ENCODE measurements at regions of chr7 and their contacts with region 1.

Region 1: GRCh38 chr7:114916261-114916892 is 5.5 kb upstream of the MDFIC start:
- DNase-seq: peak in 1 of 9 donors; percentile 50
- ATAC-seq: peak; percentile 73
- H3K4me3 ChIP-seq: peak overlapping the region; percentile 14
- H3K4me3 Mint-ChIP-seq: peak overlapping the region; percentile 25 to 78 (median 65)
- H3K27ac ChIP-seq: peak overlapping the region; percentile 8
- H3K27ac Mint-ChIP-seq: peak overlapping the region; percentile 59 to 96 (median 82)
- H3K4me1 ChIP-seq: peaks cover 7 to 22% of the 10 kb centered on the region in 2 donors
- H3K4me1 Mint-ChIP-seq: peaks cover 9 to 43% (median 26%) of the 10 kb centered on the region in 7 donors
- H3K27me3 ChIP-seq: no peaks in the 10 kb centered on the region
- H3K27me3 Mint-ChIP-seq: no peaks in the 10 kb centered on the region

Region 2: DNA sequence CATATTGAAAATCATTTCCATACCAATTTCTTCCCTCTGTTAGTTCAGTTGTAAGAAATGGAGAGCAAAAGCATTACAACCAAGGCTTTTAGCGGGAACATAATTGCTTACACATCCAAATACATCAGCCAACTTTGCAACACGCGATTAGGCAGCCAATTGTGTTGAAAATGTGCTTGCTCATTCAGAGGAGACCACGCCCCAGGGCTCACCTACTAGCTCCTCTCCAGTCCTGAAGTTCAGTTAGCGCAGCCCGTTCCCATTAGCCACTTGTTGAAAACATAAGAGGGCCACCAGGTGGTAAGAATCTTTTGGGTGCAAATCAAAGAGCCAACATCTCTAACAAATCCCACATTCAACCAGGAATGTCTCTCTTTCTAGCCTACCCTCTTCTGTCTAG is 207.7 kb before region 1 on chr7:
- CTCF ChIA-PET with region 1: no interaction called
- POLR2A ChIA-PET with region 1: no interaction called
- intact Hi-C with region 1: no loop called
- DNase-seq: no peak
- ATAC-seq: no peak
- H3K4me3 ChIP-seq: no peak overlapping the region
- H3K4me3 Mint-ChIP-seq: no peak overlapping the region
- H3K27ac ChIP-seq: no peak overlapping the region
- H3K27ac Mint-ChIP-seq: no peak overlapping the region
- H3K4me1 ChIP-seq: no peaks in the 10 kb centered on the region
- H3K4me1 Mint-ChIP-seq: no peaks in the 10 kb centered on the region
- H3K27me3 ChIP-seq: no peaks in the 10 kb centered on the region
- H3K27me3 Mint-ChIP-seq: peaks cover 0 to 14% (median 0%) of the 10 kb centered on the region in 5 donors

Region 3: DNA sequence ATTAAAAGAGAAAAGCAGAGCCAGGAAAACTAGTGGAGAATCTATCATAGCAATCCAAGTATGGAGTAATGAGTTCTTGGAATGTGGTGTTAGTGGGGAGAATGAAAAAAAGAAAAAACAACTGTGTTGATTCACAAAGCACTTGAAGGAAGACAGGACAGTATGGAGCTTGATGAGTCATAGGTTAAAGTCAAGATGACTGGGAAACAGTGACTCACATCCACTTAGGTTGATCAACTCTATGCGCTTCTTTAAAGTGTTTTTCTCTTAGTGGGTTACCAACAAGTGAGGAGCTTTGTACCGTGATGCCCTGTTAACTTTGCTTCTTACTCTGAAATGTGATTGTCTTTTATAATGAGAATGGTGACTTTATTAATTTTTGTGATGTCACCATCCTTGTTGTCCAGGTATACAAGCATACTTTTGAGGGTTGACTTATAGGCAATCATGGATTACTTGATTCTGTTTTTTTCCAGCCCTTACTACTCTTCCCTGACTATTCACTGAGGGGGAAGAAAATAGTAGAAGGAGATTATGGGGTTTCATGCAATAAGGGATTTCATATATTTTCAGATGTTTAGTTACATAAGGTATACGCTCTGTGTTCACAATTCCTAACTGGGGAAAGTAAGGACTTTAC is 26.6 kb before region 1 on chr7:
- CTCF ChIA-PET with region 1: no interaction called
- POLR2A ChIA-PET with region 1: no interaction called
- intact Hi-C with region 1: loop called in 1 of 2 experiments (anchors 1 kb)
- DNase-seq: no peak
- ATAC-seq: peak; percentile 49
- H3K4me3 ChIP-seq: no peak overlapping the region
- H3K4me3 Mint-ChIP-seq: no peak overlapping the region
- H3K27ac ChIP-seq: no peak overlapping the region
- H3K27ac Mint-ChIP-seq: peak overlapping the region in 3 of 9 donors; percentile 33 to 67 (median 53)
- H3K4me1 ChIP-seq: no peaks in the 10 kb centered on the region
- H3K4me1 Mint-ChIP-seq: peaks cover 0 to 22% (median 0%) of the 10 kb centered on the region in 7 donors
- H3K27me3 ChIP-seq: peaks cover 0 to 2% of the 10 kb centered on the region in 2 donors
- H3K27me3 Mint-ChIP-seq: no peaks in the 10 kb centered on the region

Region 4: GRCh38 chr7:115135769-115136410 is 219.5 kb after region 1 on chr7:
- CTCF ChIA-PET with region 1: no interaction called
- POLR2A ChIA-PET with region 1: no interaction called
- intact Hi-C with region 1: loop called (anchors 5 kb)
- DNase-seq: peak in 4 of 9 donors; percentile 2 to 21 (median 8)
- ATAC-seq: peak; percentile 55
- H3K4me3 ChIP-seq: no peak overlapping the region
- H3K4me3 Mint-ChIP-seq: peak overlapping the region in 5 of 10 donors; percentile 15 to 54 (median 38)
- H3K27ac ChIP-seq: no peak overlapping the region
- H3K27ac Mint-ChIP-seq: peak overlapping the region in 4 of 9 donors; percentile 14 to 48 (median 24)
- H3K4me1 ChIP-seq: peaks cover 7 to 12% of the 10 kb centered on the region in 2 donors
- H3K4me1 Mint-ChIP-seq: peaks cover 14 to 35% (median 29%) of the 10 kb centered on the region in 7 donors
- H3K27me3 ChIP-seq: no peaks in the 10 kb centered on the region
- H3K27me3 Mint-ChIP-seq: peaks cover 0 to 6% (median 0%) of the 10 kb centered on the region in 5 donors